ENCODE measurements at regions of chr9 and their contacts with region 1.

Region 1: GRCh38 chr9:135085830-135086546 is 1.5 kb upstream of the OLFM1 start:
- DNase-seq: peak; percentile 89 to 90
- H3K4me3 ChIP-seq: peak overlapping the region in 1 of 3 donors; percentile 5
- H3K27ac ChIP-seq: no peak overlapping the region
- H3K4me1 ChIP-seq: peaks cover 7 to 33% of the 10 kb centered on the region in 2 donors
- H3K27me3 ChIP-seq: peaks cover 7% of the 10 kb centered on the region
- CTCF ChIP-seq: peak; percentile 70 to 99 (median 97)
- POLR2A ChIP-seq: no peak

Region 2: GRCh38 chr9:135343837-135344522 is 258.0 kb after region 1 on chr9:
- intact Hi-C with region 1: loop called (anchors 5 kb)
- DNase-seq: peak; percentile 63 to 65
- H3K4me3 ChIP-seq: no peak overlapping the region
- H3K27ac ChIP-seq: no peak overlapping the region
- H3K4me1 ChIP-seq: no peaks in the 10 kb centered on the region
- H3K27me3 ChIP-seq: no peaks in the 10 kb centered on the region
- CTCF ChIP-seq: peak; percentile 57 to 93 (median 76)
- POLR2A ChIP-seq: no peak

Region 3: GRCh38 chr9:135413459-135413858 is 327.5 kb after region 1 on chr9:
- intact Hi-C with region 1: loop called (anchors 2 kb)
- DNase-seq: no peak
- H3K4me3 ChIP-seq: no peak overlapping the region
- H3K27ac ChIP-seq: no peak overlapping the region
- H3K4me1 ChIP-seq: no peaks in the 10 kb centered on the region
- H3K27me3 ChIP-seq: no peaks in the 10 kb centered on the region
- CTCF ChIP-seq: no peak
- POLR2A ChIP-seq: no peak